ENCODE measurements at regions of chr2 and their contacts with region 1.

Region 1: DNA sequence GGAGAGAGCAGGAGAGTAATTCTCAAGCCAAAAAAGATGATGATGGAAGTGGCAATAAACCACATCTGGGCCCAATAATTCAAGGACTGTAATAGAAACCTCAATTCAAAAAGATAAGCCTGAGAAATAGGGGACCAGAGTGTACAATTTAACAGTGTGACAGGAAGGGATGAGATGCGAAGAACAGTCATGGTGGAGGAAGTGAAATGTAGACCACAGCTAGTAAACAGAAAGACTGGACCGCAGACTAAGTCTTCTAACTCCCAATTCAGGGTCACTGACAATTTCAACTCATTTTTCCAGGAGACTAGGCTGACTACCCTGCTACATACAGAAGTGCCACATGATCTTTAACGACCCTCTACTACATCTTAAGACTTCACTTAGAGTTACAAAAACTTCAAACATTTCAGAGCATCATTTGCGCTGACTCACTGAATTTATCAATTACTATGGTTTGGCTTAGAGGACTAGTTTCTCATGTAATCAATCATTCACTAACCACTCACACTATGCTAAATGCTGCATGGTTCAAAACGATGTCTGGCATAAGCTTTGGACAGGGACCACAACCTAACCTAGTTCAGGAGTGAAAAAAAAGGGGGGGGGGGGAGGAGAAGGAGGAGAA is 9.0 kb downstream of the CUL3 start:
- DNase-seq: peak; percentile 27
- ATAC-seq: peak; percentile 57
- H3K4me3 ChIP-seq: no peak overlapping the region
- H3K4me3 Mint-ChIP-seq: peak overlapping the region; percentile 35
- H3K27ac ChIP-seq: no peak overlapping the region
- H3K27ac Mint-ChIP-seq: peak overlapping the region; percentile 68
- H3K4me1 ChIP-seq: peaks cover 66 to 80% of the 10 kb centered on the region in 2 donors
- H3K4me1 Mint-ChIP-seq: peaks cover 89% of the 10 kb centered on the region
- H3K27me3 ChIP-seq: no peaks in the 10 kb centered on the region
- H3K27me3 Mint-ChIP-seq: no peaks in the 10 kb centered on the region
- CTCF ChIP-seq: no peak

Region 2: GRCh38 chr2:224359569-224359968 is 216.6 kb before region 1 on chr2:
- CTCF ChIA-PET with region 1: no interaction called
- POLR2A ChIA-PET with region 1: no interaction called
- intact Hi-C with region 1: no loop called
- DNase-seq: no peak
- ATAC-seq: no peak
- H3K4me3 ChIP-seq: no peak overlapping the region
- H3K4me3 Mint-ChIP-seq: no peak overlapping the region
- H3K27ac ChIP-seq: no peak overlapping the region
- H3K27ac Mint-ChIP-seq: no peak overlapping the region
- H3K4me1 ChIP-seq: no peaks in the 10 kb centered on the region
- H3K4me1 Mint-ChIP-seq: no peaks in the 10 kb centered on the region
- H3K27me3 ChIP-seq: no peaks in the 10 kb centered on the region
- H3K27me3 Mint-ChIP-seq: peaks cover 4% of the 10 kb centered on the region
- CTCF ChIP-seq: peak; percentile 6

Region 3: GRCh38 chr2:224532931-224533330 is 43.3 kb before region 1 on chr2:
- CTCF ChIA-PET with region 1: interaction called, 3 read pairs
- POLR2A ChIA-PET with region 1: interaction called, 4 read pairs
- intact Hi-C with region 1: loop called (anchors 2 kb)
- DNase-seq: no peak
- ATAC-seq: no peak
- H3K4me3 ChIP-seq: no peak overlapping the region
- H3K4me3 Mint-ChIP-seq: no peak overlapping the region
- H3K27ac ChIP-seq: peak overlapping the region in 1 of 2 donors; percentile 50
- H3K27ac Mint-ChIP-seq: peak overlapping the region; percentile 22
- H3K4me1 ChIP-seq: peaks cover 3 to 12% of the 10 kb centered on the region in 2 donors
- H3K4me1 Mint-ChIP-seq: peaks cover 49% of the 10 kb centered on the region
- H3K27me3 ChIP-seq: no peaks in the 10 kb centered on the region
- H3K27me3 Mint-ChIP-seq: no peaks in the 10 kb centered on the region
- CTCF ChIP-seq: no peak

Region 4: DNA sequence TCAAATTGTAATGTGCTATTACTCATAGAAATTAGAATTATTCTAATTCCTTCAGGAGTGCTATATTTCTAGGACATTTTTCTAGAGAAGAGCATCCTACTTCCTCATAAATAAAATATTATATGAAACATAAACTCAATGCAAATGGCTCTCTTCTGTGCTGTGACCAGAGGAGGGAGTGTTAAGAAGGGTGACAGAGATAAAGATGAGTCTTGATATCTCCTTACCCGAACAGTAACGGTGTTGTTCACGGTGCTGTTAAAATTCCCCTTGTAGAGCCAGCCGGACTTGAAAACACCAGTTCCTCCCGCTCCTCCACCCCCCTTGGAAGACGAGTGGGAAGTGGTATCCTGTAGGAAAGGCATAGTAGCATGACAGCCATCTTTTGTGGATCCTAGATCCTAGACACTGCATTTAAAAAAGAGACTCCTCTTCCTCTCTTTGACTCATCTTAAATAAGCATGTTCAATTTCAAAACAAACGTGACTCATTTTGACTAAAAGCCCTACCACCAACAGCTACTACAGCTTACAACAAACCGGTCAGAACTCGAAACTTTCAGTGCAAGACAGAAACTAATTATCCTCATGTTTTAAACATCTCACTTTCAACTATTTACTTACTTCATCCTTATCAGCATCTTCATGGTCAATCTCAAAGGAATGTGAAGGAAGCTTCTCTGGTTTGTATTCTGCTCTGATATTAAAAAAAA is 309.8 kb after region 1 on chr2:
- CTCF ChIA-PET with region 1: no interaction called
- POLR2A ChIA-PET with region 1: no interaction called
- intact Hi-C with region 1: no loop called
- DNase-seq: no peak
- ATAC-seq: no peak
- H3K4me3 ChIP-seq: no peak overlapping the region
- H3K4me3 Mint-ChIP-seq: peak overlapping the region; percentile 48
- H3K27ac ChIP-seq: peak overlapping the region in 1 of 2 donors; percentile 18
- H3K27ac Mint-ChIP-seq: peak overlapping the region; percentile 91
- H3K4me1 ChIP-seq: no peaks in the 10 kb centered on the region
- H3K4me1 Mint-ChIP-seq: peaks cover 27% of the 10 kb centered on the region
- H3K27me3 ChIP-seq: no peaks in the 10 kb centered on the region
- H3K27me3 Mint-ChIP-seq: no peaks in the 10 kb centered on the region
- CTCF ChIP-seq: no peak